HCT116 (cell line): ENCODE measurements at regions of chr12 and their contacts with region 1.

Region 1: DNA sequence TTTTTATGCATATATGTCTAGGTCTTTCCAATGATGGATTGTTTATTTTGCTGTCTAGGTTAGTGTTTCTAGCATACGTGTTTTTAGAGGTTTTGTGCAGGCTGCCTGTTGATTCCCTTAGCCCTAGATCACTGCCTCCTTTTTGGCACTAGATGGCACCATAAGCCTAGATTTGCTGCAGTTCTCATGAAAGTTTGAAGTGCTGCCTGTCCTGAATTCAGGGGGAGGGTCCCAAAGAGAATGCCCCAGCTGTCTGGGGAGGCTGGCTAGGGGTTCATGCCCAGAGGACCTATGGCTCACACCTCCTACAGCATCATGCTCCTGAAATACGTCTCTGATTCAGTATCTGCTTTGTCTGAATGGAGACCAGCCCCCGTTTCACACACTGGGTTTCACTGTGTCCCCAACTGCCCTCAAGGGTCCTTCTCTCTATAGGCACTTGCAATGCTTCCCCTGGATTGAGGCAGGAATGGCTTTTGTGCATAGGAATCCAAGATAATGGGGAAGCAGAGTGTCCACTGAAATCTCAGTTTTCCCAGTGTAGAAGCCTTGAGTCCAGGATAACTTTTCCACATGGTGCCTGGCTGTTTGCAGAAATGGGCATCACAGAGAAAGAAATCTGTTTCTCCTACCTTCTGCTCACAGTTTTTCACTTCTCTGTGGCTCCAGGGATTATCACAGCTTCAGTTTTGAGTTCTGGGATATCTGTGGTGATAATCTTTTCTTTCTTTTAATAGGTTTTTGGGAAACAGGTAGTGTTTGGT is 14.2 kb upstream of the TXNRD1 start:
- DNase-seq: peak; percentile 60
- ATAC-seq: peak; percentile 97
- H3K4me3 ChIP-seq: no peak overlapping the region
- H3K27ac ChIP-seq: no peak overlapping the region
- H3K4me1 ChIP-seq: peaks cover 0 to 3% of the 10 kb centered on the region in 2 experiments; a peak in 1 of 4 replicates
- H3K27me3 ChIP-seq: no peaks in the 10 kb centered on the region
- CTCF ChIP-seq: peak; percentile 76 to 96 (median 84)
- POLR2A ChIP-seq: no peak
- RAD21 ChIP-seq: peak; percentile 95

Region 2: DNA sequence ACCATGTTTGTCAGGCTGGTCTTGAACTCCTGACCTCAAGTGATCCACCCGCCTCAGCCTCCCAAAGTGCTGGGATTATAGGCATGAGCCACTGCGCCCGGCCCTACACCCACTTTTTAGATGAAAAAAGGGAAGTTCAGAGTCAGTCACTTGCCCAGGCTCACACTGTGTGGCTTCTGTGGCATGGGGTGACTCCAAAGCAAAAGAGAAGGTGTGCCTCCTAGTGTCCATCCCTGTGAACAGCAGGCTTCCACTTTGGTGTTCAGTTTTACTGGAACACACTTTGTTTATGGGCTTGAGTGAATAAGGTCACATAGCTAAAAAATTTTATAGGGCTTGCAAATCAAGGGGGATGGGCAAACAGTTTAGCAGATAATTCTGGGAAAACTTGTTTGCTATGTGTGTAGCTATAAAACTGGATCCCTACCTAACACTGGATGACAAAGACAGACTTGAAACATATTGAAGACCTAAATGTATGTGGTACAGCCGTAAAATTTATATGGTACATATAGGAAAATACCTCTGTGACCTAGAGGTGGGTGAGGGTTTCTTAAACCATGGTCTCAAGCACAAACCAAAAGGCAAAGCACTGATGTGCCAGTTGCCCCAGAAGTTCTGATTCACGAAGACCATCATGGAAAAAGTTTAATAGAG is 157.1 kb after region 1 on chr12:
- CTCF ChIA-PET with region 1: no interaction called
- POLR2A ChIA-PET with region 1: interaction called, 5 read pairs
- RAD21 ChIA-PET with region 1: interaction called in 1 of 2 experiments, 4 read pairs
- intact Hi-C with region 1: loop called (anchors 1 kb)
- DNase-seq: peak; percentile 35
- ATAC-seq: peak; percentile 72
- H3K4me3 ChIP-seq: no peak overlapping the region
- H3K27ac ChIP-seq: no peak overlapping the region
- H3K4me1 ChIP-seq: no peaks in the 10 kb centered on the region
- H3K27me3 ChIP-seq: no peaks in the 10 kb centered on the region
- CTCF ChIP-seq: peak; percentile 78 to 93 (median 79)
- POLR2A ChIP-seq: no peak
- RAD21 ChIP-seq: peak; percentile 87

Region 3: GRCh38 chr12:104865080-104865479 is 663.7 kb after region 1 on chr12:
- CTCF ChIA-PET with region 1: no interaction called
- POLR2A ChIA-PET with region 1: no interaction called
- RAD21 ChIA-PET with region 1: no interaction called
- intact Hi-C with region 1: loop called (anchors 5 kb)
- DNase-seq: no peak
- ATAC-seq: no peak
- H3K4me3 ChIP-seq: no peak overlapping the region
- H3K27ac ChIP-seq: no peak overlapping the region
- H3K4me1 ChIP-seq: no peaks in the 10 kb centered on the region
- H3K27me3 ChIP-seq: no peaks in the 10 kb centered on the region
- CTCF ChIP-seq: no peak
- POLR2A ChIP-seq: no peak
- RAD21 ChIP-seq: no peak

Region 4: GRCh38 chr12:105053116-105053572 is 851.7 kb after region 1 on chr12:
- CTCF ChIA-PET with region 1: no interaction called
- POLR2A ChIA-PET with region 1: no interaction called
- RAD21 ChIA-PET with region 1: no interaction called
- intact Hi-C with region 1: loop called (anchors 2 kb)
- DNase-seq: peak; percentile 67
- ATAC-seq: peak; percentile 84
- H3K4me3 ChIP-seq: no peak overlapping the region
- H3K27ac ChIP-seq: no peak overlapping the region
- H3K4me1 ChIP-seq: no peaks in the 10 kb centered on the region
- H3K27me3 ChIP-seq: no peaks in the 10 kb centered on the region
- CTCF ChIP-seq: peak; percentile 85 to 97 (median 86)
- POLR2A ChIP-seq: no peak
- RAD21 ChIP-seq: peak; percentile 97

Region 5: DNA sequence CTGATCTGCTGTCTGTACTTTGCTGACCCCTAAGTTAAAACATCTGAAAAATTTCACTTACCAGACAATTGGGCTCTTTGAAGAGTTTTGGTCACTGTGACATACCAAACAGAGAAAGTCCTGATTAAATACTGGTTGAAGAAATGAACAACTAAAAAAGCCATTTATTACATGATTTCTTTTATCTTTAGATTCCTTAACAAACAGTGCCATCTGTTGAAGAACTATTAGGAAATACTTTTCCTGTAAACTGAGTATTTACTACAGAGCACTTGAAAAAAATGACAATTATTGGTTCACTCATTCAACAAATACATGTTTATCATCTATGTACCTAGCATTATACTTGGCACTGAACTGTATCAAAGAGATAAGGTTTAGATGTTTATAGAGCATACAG is 899.6 kb after region 1 on chr12:
- CTCF ChIA-PET with region 1: no interaction called
- POLR2A ChIA-PET with region 1: no interaction called
- RAD21 ChIA-PET with region 1: no interaction called
- intact Hi-C with region 1: loop called (anchors 2 kb)
- DNase-seq: no peak
- ATAC-seq: peak; percentile 54
- H3K4me3 ChIP-seq: no peak overlapping the region
- H3K27ac ChIP-seq: no peak overlapping the region
- H3K4me1 ChIP-seq: peaks cover 3 to 10% of the 10 kb centered on the region in 2 experiments; a peak in 3 of 4 replicates
- H3K27me3 ChIP-seq: no peaks in the 10 kb centered on the region
- CTCF ChIP-seq: peak in 2 of 3 experiments; percentile 32 to 33; a peak in 2 of 6 replicates
- POLR2A ChIP-seq: no peak
- RAD21 ChIP-seq: peak; percentile 63

Region 6: GRCh38 chr12:105382771-105383622 is 1181.6 kb after region 1 on chr12:
- CTCF ChIA-PET with region 1: no interaction called
- POLR2A ChIA-PET with region 1: no interaction called
- RAD21 ChIA-PET with region 1: no interaction called
- intact Hi-C with region 1: loop called (anchors 2 kb)
- DNase-seq: peak; percentile 41
- ATAC-seq: peak; percentile 83
- H3K4me3 ChIP-seq: no peak overlapping the region
- H3K27ac ChIP-seq: no peak overlapping the region
- H3K4me1 ChIP-seq: no peaks in the 10 kb centered on the region
- H3K27me3 ChIP-seq: no peaks in the 10 kb centered on the region
- CTCF ChIP-seq: peak; percentile 70 to 85 (median 80)
- POLR2A ChIP-seq: no peak
- RAD21 ChIP-seq: peak; percentile 94

Region 7: DNA sequence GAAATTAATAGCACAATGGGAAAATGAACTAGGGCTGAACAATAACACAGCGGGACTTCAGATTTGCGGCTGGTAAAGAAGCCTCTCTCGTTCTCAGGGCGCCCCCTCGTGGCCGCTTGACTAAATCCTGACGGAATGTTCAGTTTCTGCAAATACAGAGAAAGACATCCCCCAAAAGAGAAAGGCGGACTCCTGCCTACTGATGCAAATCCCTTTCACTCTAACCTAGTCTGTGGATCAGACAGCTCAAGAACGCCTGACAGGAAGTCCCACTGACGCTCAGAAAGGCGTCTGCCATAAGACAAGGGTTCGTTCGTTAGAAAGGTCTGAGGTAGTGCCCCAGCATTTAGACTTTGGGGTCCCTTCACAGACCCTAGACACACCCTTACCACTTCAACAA is 1934.8 kb after region 1 on chr12:
- CTCF ChIA-PET with region 1: no interaction called
- POLR2A ChIA-PET with region 1: no interaction called
- RAD21 ChIA-PET with region 1: no interaction called
- intact Hi-C with region 1: loop called (anchors 10 kb)
- DNase-seq: peak; percentile 37
- ATAC-seq: no peak
- H3K4me3 ChIP-seq: no peak overlapping the region
- H3K27ac ChIP-seq: no peak overlapping the region
- H3K4me1 ChIP-seq: peaks cover 28 to 40% of the 10 kb centered on the region in 2 experiments
- H3K27me3 ChIP-seq: no peaks in the 10 kb centered on the region
- CTCF ChIP-seq: peak; percentile 69 to 89 (median 83)
- POLR2A ChIP-seq: no peak
- RAD21 ChIP-seq: peak; percentile 95